Esophagus muscularis mucosa (tissue), 4 donors: ENCODE measurements at regions of chr3 and their contacts with region 1.

Region 1: DNA sequence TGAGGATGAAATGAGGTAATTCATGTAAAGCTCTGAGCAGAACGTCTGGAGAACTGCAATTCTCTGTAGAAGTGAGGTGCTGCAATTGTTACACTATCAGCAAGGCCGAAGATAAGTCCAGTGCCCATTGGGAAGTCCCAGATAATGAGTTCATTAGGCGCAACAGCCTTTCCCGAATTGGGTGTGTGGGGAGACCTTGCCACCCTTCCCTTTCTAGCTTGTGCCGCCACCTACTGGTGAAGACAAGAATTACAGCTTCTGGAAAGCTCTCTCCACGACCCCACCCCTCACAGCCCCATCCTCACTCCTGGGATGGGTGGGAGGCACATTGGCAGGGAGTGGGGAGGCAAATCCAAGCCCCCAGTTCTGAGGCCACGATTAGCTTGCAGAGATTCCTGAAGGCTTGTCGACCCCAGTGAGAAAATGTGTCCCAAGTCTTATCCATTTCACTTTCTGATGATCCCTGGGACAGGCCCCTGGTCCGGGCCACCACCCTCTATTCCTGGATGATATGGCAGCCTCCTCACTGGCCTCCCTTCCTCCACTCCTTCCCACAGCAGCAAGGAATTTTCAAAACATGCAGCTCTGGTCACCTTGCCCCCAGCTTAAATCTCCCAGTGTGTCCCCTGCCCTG is 36.4 kb downstream of the FAM3D start:
- DNase-seq: no peak
- H3K4me3 ChIP-seq: no peak overlapping the region
- H3K27ac ChIP-seq: peak overlapping the region in 2 of 4 donors; percentile 70 to 71
- H3K4me1 ChIP-seq: peaks cover 37 to 40% (median 37%) of the 10 kb centered on the region in 4 donors
- H3K27me3 ChIP-seq: peaks cover 0 to 4% (median 2%) of the 10 kb centered on the region in 4 donors
- CTCF ChIP-seq: peak; percentile 91 to 94 (median 92)
- EP300 ChIP-seq: no peak
- POLR2A ChIP-seq: no peak

Region 2: GRCh38 chr3:58568572-58569286 is 61.5 kb before region 1 on chr3:
- intact Hi-C with region 1: loop called (anchors 1 kb)
- DNase-seq: peak; percentile 95
- H3K4me3 ChIP-seq: no peak overlapping the region
- H3K27ac ChIP-seq: no peak overlapping the region
- H3K4me1 ChIP-seq: peaks cover 10 to 22% (median 18%) of the 10 kb centered on the region in 4 donors
- H3K27me3 ChIP-seq: no peaks in the 10 kb centered on the region
- CTCF ChIP-seq: peak; percentile 88 to 95 (median 94)
- EP300 ChIP-seq: no peak
- POLR2A ChIP-seq: no peak

Region 3: DNA sequence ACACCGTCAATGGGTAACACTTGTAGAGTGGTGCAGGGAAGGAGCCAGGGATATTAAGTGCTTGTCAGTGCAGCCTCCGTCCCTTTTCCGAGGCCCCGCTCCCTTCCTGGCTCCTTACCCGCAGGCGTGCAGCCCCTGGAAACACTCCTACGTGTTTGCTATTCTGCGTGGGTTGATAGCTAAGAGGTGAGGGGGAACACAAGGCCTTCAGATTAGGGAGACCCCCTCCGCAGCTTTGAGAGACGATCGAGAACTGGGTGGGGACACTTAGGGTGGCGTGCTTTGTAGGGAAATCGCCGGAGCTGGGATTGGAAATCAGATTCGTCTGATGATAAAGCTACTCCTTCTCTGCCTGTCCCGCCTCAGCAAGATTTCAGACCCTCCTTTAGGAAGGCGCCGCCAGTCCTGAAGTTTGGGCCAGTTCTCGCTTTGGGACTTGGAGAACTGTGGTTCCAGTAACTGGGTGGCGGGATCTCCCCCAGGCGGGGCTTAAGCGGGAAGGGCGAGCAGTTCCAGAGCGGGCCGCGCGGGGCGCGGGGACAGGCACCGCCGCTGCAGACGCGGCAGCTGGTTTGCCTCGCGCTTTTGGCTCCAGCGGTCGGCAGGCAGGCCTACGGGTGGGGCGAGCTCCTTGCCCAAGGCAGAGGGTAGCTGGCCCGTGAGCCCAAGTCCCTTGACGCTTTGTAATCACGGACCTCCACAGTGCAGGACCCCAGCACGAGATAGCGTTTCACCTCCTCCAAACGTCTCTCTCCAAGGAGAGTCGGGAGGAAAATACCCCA is 45.0 kb before region 1 on chr3:
- intact Hi-C with region 1: loop called (anchors 5 kb)
- DNase-seq: peak; percentile 96
- H3K4me3 ChIP-seq: peak overlapping the region; percentile 56 to 63 (median 60)
- H3K27ac ChIP-seq: peak overlapping the region; percentile 78 to 87 (median 80)
- H3K4me1 ChIP-seq: peaks cover 21 to 36% (median 26%) of the 10 kb centered on the region in 4 donors
- H3K27me3 ChIP-seq: peaks cover 0 to 28% (median 11%) of the 10 kb centered on the region in 4 donors
- CTCF ChIP-seq: peak; percentile 62 to 99 (median 67)
- EP300 ChIP-seq: peak; percentile 73
- POLR2A ChIP-seq: no peak